K562 (cell line): ENCODE measurements at regions of chr11 and their contacts with region 1.

Region 1: GRCh38 chr11:19742588-19743292 is 30.1 kb downstream of the NAV2 start:
- DNase-seq: peak; percentile 41 to 71 (median 48)
- ATAC-seq: peak; percentile 94
- H3K4me3 ChIP-seq: no peak overlapping the region
- H3K27ac ChIP-seq: no peak overlapping the region
- H3K4me1 ChIP-seq: no peaks in the 10 kb centered on the region
- H3K27me3 ChIP-seq: peaks cover 0 to 14% of the 10 kb centered on the region in 2 experiments; a peak in 1 of 5 replicates
- CTCF ChIP-seq: peak; percentile 78 to 82 (median 81)
- EP300 ChIP-seq: no peak
- POLR2A ChIP-seq: no peak
- RAD21 ChIP-seq: peak; percentile 94 to 95

Region 2: DNA sequence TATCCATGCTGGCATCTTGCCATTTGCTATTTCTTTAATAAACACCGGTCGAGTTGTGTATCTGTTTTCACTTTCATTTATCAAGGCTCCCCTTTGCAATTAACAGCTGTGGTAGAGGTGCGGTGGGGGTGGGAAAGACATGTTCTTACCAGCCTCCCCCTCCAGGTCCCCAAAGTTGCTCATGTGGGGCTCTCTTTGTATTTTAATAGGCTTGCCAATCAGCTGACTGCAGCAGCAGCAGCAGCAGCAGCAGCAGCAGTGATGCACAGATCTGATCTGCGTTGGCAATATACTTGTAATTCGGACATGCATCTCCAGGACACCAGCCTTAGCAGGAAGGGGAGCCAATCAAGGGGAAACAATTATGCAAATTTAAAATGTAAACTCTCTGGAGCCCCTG is 461.7 kb before region 1 on chr11:
- CTCF ChIA-PET with region 1: no interaction called
- POLR2A ChIA-PET with region 1: no interaction called
- in situ Hi-C with region 1: loop called (anchors 10 kb)
- intact Hi-C with region 1: no loop called
- DNase-seq: no peak
- ATAC-seq: no peak
- H3K4me3 ChIP-seq: no peak overlapping the region
- H3K27ac ChIP-seq: no peak overlapping the region
- H3K4me1 ChIP-seq: no peaks in the 10 kb centered on the region
- H3K27me3 ChIP-seq: peaks cover 2 to 20% of the 10 kb centered on the region in 2 experiments; a peak in 3 of 5 replicates
- CTCF ChIP-seq: no peak
- EP300 ChIP-seq: no peak
- POLR2A ChIP-seq: no peak
- RAD21 ChIP-seq: no peak

Region 3: DNA sequence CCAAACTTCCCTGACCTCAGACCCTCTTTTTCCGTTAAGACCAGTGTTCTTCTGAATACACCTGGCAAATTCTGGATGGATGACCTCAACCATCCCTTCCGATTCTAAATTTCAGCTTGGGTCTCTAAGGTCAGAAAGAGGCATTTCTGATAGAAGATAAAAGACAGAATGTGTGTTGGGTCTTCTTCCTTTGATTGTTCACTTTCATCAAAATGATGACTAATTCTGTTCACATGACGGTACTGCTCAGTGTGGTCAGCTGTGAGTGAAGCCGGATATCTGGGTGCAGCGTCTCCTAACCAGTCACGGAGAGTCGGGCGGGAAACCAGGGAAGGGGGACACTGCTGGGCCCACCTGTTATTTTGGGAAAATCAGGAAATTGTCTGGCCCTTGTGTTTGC is 181.7 kb before region 1 on chr11:
- CTCF ChIA-PET with region 1: interaction called, 22 read pairs
- POLR2A ChIA-PET with region 1: interaction called, 3 read pairs
- in situ Hi-C with region 1: loop called (anchors 5 kb)
- intact Hi-C with region 1: loop called (anchors 1 kb)
- DNase-seq: no peak
- ATAC-seq: no peak
- H3K4me3 ChIP-seq: no peak overlapping the region
- H3K27ac ChIP-seq: no peak overlapping the region
- H3K4me1 ChIP-seq: peaks cover 0 to 5% of the 10 kb centered on the region in 2 experiments; a peak in 1 of 5 replicates
- H3K27me3 ChIP-seq: peaks cover 0 to 17% of the 10 kb centered on the region in 2 experiments; a peak in 2 of 5 replicates
- CTCF ChIP-seq: no peak
- EP300 ChIP-seq: no peak
- POLR2A ChIP-seq: no peak
- RAD21 ChIP-seq: no peak

Region 4: GRCh38 chr11:19566583-19567379 is 176.0 kb before region 1 on chr11:
- CTCF ChIA-PET with region 1: interaction called, 22 read pairs
- POLR2A ChIA-PET with region 1: interaction called, 3 read pairs
- in situ Hi-C with region 1: loop called (anchors 5 kb)
- intact Hi-C with region 1: loop called (anchors 1 kb)
- DNase-seq: no peak
- ATAC-seq: no peak
- H3K4me3 ChIP-seq: no peak overlapping the region
- H3K27ac ChIP-seq: no peak overlapping the region
- H3K4me1 ChIP-seq: peaks cover 0 to 5% of the 10 kb centered on the region in 2 experiments; a peak in 1 of 5 replicates
- H3K27me3 ChIP-seq: peaks cover 0 to 13% of the 10 kb centered on the region in 2 experiments; a peak in 2 of 5 replicates
- CTCF ChIP-seq: no peak
- EP300 ChIP-seq: no peak
- POLR2A ChIP-seq: no peak
- RAD21 ChIP-seq: no peak